Endothelial cell of umbilical vein (primary cell): ENCODE measurements at regions of chr16 and their contacts with region 1.

Region 1: DNA sequence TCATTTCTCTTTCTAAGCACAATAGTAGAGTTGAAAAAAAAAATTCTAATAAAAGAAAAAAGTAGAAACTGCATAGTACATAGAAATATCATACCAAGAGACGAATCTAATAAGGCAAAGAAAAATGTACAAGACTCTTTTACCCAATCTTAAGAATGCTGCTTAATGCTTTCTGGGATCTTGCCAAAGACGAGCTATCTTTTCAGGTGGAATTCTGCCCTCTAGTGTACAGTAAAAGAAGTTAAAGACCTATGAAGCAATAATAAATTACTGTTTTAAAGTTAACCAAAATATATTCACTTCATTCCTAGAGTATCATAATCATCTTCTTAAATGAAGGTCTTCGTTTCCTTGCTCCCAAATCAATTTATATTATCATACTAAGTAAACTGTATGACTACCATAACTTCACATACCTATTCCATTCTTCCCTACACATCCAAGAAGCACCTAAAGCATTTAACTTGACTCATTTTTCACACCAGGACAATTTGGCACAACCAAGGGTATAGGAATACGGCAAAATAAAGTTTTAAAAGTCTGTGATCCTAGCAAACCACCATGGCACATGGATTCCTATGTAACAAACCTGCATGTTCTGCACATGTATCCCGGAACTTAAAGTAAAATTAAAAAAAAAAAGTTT is 47.7 kb downstream of the CFDP1 start:
- DNase-seq: peak; percentile 88
- H3K4me3 ChIP-seq: no peak overlapping the region
- H3K27ac ChIP-seq: peak overlapping the region; percentile 28
- H3K4me1 ChIP-seq: peaks cover 36% of the 10 kb centered on the region
- H3K27me3 ChIP-seq: no peaks in the 10 kb centered on the region
- CTCF ChIP-seq: peak; percentile 19 to 30
- POLR2A ChIP-seq: no peak

Region 2: DNA sequence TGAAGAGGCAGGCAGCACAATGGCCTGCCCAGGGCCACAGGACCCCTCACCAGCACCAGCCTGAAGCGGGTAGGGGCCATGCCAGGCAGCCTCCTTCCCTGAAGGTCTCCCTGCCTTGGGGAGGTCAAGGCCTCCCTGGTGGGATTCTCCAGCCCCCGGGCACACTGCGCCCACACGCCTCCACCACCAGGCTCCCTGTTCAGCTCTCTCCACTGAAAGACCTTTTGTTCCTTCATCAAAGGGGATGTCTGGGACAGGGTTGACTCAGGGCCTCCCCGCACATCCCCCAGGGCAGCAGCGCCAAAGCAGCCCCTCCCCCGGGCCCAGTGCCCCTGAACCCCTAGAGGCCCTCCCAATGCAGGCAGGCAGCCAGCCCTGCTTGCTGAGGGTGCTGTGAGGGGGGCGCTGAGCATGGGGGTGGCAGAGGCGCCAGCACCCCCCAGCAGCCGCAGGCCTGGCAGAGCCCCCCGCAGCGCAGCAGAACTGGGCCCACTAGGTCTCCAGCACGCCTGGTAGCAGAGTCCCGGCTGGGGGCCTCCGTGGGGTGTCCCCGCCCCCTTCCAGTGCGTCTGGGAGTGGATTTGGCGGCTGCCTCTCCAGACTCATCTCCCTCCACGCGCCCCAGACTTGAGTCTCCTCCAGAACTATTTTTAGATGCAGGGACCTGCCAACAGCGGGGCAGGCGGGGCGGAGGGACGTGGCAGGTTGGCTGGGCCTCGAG is 147.3 kb before region 1 on chr16:
- CTCF ChIA-PET with region 1: interaction called, 120 read pairs
- POLR2A ChIA-PET with region 1: no interaction called
- dilution Hi-C with region 1: no loop called
- intact Hi-C with region 1: loop called (anchors 1 kb)
- DNase-seq: no peak
- H3K4me3 ChIP-seq: no peak overlapping the region
- H3K27ac ChIP-seq: peak overlapping the region; percentile 48
- H3K4me1 ChIP-seq: peaks cover 10% of the 10 kb centered on the region
- H3K27me3 ChIP-seq: no peaks in the 10 kb centered on the region
- CTCF ChIP-seq: no peak
- POLR2A ChIP-seq: no peak

Region 3: DNA sequence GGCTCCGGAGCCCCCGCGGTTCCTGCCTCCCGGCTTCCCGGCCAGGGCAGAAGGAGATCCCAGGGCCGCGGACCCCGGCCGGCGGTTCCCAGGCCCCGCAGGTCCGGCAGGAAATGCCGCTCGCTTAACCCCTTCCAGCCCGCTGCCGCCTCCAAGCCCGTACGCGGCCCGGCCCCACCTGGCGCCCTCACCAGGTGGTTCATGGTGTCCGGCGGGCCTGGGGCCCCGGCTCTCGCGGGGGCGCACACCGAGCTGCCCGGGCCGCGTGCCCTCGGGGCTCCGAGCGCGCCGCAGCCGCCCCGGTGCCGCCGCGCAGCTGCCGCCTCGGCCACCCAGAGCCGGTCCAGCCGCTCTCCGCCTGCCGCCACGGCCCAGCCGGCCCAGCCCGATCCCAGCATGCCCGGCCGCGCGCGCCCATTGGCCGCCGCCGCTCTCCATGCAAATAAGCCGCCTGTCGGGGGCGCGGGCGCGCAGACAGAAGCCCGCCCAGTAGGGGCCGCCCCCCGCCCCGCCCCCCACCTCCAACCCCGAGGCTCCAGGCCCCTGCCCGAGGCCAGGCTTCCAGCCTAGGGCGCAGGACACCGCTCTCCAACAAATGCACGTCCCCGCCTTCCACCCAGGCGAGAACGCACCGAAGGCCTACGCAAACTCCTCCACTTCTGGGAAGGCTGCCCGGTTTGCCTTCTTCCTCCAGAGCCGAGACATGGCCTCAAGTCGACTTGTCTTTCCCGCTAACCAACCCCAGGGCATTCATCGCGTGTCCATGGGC is 134.2 kb before region 1 on chr16 and contains the start of gene BCAR1:
- CTCF ChIA-PET with region 1: interaction called, 25 read pairs
- POLR2A ChIA-PET with region 1: interaction called, 4 read pairs
- dilution Hi-C with region 1: no loop called
- intact Hi-C with region 1: no loop called
- DNase-seq: peak; percentile 89
- H3K4me3 ChIP-seq: peak within 1 kb of the TSS; percentile 50 to 83 (median 80)
- H3K27ac ChIP-seq: peak within 1 kb of the TSS; percentile 92
- H3K4me1 ChIP-seq: peaks cover 80% of the 10 kb centered on the region
- H3K27me3 ChIP-seq: no peaks in the 10 kb centered on the region
- CTCF ChIP-seq: no peak
- POLR2A ChIP-seq: peak; percentile 73
- total RNA-seq, gene BCAR1: 237 and 267 TPM in 2 replicates

Region 4: DNA sequence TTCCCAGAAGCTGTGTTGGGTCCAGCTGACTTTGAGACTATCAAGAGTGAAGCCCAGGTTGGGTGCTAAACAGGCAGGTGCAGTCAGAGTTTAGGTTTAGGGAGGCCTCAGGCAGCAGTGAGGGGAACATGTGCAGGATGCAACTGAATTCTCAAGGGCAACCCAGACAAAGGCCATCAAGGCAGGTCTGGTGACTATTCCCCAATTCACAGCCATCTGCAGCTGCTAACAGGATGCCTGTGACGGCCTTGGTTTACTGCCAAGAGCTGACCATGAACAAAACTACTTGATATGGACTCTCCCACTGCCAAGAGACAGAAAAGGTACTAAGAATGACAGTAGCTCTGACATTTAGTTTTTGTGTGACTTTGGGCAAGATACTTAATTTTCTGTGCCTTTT is 89.0 kb before region 1 on chr16:
- CTCF ChIA-PET with region 1: interaction called, 10 read pairs
- POLR2A ChIA-PET with region 1: no interaction called
- dilution Hi-C with region 1: no loop called
- intact Hi-C with region 1: no loop called
- DNase-seq: peak; percentile 86
- H3K4me3 ChIP-seq: no peak overlapping the region
- H3K27ac ChIP-seq: peak overlapping the region; percentile 40
- H3K4me1 ChIP-seq: peaks cover 9% of the 10 kb centered on the region
- H3K27me3 ChIP-seq: no peaks in the 10 kb centered on the region
- CTCF ChIP-seq: no peak
- POLR2A ChIP-seq: peak; percentile 30

Region 5: DNA sequence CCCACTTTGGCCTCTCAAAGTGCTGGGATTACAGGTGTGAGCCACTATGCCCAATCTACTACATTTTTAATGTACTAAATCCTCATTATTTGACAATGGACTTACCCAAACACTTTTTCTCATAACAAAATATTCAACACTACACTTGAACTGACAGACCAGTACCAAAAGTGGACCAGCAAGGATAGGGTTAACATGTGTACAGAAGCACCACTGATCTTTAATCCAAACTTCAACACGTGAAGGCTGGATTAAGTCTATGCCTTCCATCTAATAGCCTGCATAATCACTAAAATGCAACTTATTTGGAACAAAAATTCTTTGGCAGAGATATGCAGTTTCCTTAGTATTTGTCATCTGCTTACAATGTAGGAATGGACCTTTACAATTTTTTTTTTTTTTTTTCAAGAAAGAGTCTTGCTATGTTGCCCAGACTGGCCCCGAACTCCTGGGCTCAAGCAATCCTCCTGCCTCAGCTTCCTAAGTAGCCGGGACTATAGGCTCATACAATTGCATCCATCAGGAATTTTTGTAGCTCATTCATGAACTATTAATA is 74.2 kb before region 1 on chr16:
- CTCF ChIA-PET with region 1: interaction called, 22 read pairs
- POLR2A ChIA-PET with region 1: no interaction called
- dilution Hi-C with region 1: no loop called
- intact Hi-C with region 1: no loop called
- DNase-seq: no peak
- H3K4me3 ChIP-seq: no peak overlapping the region
- H3K27ac ChIP-seq: no peak overlapping the region
- H3K4me1 ChIP-seq: peaks cover 18% of the 10 kb centered on the region
- H3K27me3 ChIP-seq: no peaks in the 10 kb centered on the region
- CTCF ChIP-seq: no peak
- POLR2A ChIP-seq: no peak

Region 6: DNA sequence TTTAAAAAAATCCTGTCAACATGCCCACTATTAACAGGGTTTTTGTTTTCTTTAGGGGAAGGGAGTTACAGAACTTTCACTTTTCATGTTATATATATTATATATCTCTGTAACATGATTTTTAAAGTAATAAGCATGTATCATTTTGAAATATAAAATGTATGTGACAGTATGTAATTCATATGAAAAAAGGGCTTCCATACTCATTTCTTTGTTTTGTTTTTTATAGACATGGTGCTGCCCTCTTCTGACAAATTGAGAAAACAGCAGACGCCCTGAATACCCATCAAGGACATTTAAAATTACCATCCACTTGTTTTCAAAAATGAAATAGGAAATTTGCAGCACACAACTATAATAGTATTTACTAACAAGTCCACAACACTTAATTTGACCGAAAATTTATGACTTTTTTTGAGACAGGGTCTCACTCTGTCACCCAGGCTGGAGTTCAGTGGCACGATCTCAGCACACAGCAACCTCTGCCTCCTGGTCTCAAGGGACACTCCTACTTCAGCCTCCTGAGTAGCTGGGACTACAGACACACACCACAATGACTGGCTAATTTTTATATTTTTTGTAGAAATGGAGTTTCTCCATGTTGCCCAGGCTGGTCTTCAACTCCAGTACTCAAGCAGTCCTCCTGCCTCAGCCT is 17.3 kb after region 1 on chr16:
- CTCF ChIA-PET with region 1: interaction called, 29 read pairs
- POLR2A ChIA-PET with region 1: no interaction called
- dilution Hi-C with region 1: no loop called
- intact Hi-C with region 1: no loop called
- DNase-seq: peak; percentile 74
- H3K4me3 ChIP-seq: no peak overlapping the region
- H3K27ac ChIP-seq: peak overlapping the region; percentile 89
- H3K4me1 ChIP-seq: peaks cover 13% of the 10 kb centered on the region
- H3K27me3 ChIP-seq: no peaks in the 10 kb centered on the region
- CTCF ChIP-seq: peak; percentile 41 to 42
- POLR2A ChIP-seq: no peak

Region 7: DNA sequence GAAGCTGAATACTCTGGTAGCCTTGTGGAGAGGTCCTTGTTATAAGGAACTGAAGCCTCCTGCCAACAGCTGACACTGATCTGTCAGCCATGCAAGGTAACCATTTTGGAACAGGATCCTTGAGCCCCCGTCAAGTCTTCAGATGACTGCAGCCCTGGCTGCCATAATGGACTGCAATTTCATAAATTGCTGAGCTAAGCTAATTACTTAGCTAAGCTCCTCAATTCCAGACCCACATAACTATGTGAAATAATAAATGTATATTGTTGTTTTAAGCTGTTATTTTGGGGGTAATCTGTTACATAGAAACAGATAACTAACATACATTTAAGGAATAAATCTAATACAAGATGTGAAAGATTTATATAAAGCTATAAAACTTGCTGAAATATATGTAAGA is 220.9 kb after region 1 on chr16:
- CTCF ChIA-PET with region 1: no interaction called
- POLR2A ChIA-PET with region 1: no interaction called
- dilution Hi-C with region 1: no loop called
- intact Hi-C with region 1: no loop called
- DNase-seq: no peak
- H3K4me3 ChIP-seq: no peak overlapping the region
- H3K27ac ChIP-seq: no peak overlapping the region
- H3K4me1 ChIP-seq: no peaks in the 10 kb centered on the region
- H3K27me3 ChIP-seq: no peaks in the 10 kb centered on the region
- CTCF ChIP-seq: no peak
- POLR2A ChIP-seq: no peak